ENCODE measurements at regions of chr2 and their contacts with region 1.

Region 1: DNA sequence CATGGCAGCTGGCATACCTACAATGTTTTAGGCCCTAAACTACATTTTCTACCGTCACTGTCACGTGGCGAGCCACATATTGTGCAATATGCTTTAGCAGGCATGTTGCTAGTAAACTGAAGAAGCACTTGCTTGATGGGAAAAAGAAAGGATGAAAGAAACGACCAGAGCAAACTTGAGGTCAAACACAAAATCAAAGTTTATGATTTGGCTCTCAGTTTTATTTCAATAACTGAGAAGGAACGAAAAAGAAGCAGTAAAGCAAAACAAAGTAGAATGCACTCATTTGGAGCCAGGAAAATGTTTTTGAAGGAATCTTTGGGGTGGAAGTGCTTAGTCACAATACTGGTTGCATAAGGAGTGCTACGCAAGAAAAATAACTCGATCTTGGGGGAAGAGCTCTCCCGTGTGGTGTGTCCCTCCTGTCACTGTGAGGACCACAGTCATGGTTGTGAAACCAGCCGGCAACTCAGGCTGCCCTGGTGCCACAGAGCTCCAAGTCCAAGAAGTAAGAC is 349.8 kb downstream of the RBM43 start:
- DNase-seq: peak; percentile 48 to 65
- H3K4me3 ChIP-seq: no peak overlapping the region
- H3K27ac ChIP-seq: peak overlapping the region; percentile 55
- H3K4me1 ChIP-seq: no peaks in the 10 kb centered on the region
- H3K27me3 ChIP-seq: no peaks in the 10 kb centered on the region
- CTCF ChIP-seq: 0 out of 2 replicates have a peak, but pooled peaks have one; percentile 18

Region 2: GRCh38 chr2:150595803-150596470 is 315.9 kb before region 1 on chr2:
- CTCF ChIA-PET with region 1: no interaction called
- POLR2A ChIA-PET with region 1: interaction called, 10 read pairs
- intact Hi-C with region 1: no loop called
- DNase-seq: peak in 1 of 2 experiments; percentile 37
- H3K4me3 ChIP-seq: no peak overlapping the region
- H3K27ac ChIP-seq: no peak overlapping the region
- H3K4me1 ChIP-seq: no peaks in the 10 kb centered on the region
- H3K27me3 ChIP-seq: no peaks in the 10 kb centered on the region
- CTCF ChIP-seq: no peak